ENCODE measurements at regions of chr2 and their contacts with region 1.

Region 1: DNA sequence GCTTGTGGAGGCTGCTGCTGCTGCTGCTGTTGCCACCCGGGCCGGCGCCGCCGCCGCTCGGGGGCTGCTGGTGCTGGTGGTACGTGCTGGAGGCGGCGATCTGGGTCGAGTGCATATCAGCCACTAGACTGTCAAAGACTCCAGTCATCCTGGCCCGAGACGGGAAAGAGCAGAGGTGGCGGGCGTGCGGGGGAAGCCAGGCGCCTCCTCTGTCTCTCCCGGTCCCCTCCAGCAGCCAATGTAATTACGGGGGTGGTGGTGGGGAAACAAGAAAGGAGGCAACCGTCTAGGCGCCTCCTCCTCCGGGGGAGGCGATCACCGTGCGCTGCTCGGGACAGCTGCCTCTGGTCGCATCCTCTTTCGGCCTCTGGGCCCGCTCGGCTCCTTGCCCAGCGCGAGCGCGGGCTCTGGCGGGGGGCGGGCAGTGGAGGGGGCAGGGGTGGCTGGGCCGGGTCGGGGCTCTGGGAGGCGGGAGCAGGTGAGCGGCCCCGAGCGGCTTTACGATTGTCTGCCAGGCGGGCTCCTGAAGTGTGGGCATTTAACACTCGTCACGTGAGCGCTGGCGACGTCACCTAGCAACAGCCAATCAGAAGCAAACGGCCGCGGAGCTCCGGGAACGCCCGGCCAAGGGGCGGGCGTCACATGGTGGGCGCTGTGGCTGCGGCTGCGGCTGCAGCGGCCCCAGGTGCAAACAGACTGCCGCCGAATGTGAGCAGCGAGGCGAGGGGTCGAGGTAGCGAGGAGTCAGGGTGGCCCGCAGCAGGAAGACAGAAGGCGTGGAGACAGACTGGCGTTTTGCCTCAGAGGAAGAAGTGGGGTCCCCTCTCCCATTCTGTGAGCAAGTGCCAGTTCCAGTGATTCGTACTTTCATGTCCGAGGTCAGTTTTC is at the start of gene DLX2:
- DNase-seq: peak; percentile 88
- ATAC-seq: peak; percentile 43
- H3K4me3 Mint-ChIP-seq: peak within 1 kb of the TSS; percentile 76
- H3K27ac Mint-ChIP-seq: no peak within 1 kb of the TSS
- H3K4me1 Mint-ChIP-seq: peaks cover 45% of the 10 kb centered on the region
- H3K27me3 Mint-ChIP-seq: peaks cover 69% of the 10 kb centered on the region
- CTCF ChIP-seq: no peak
- total RNA-seq, gene DLX2: not detected

Region 2: DNA sequence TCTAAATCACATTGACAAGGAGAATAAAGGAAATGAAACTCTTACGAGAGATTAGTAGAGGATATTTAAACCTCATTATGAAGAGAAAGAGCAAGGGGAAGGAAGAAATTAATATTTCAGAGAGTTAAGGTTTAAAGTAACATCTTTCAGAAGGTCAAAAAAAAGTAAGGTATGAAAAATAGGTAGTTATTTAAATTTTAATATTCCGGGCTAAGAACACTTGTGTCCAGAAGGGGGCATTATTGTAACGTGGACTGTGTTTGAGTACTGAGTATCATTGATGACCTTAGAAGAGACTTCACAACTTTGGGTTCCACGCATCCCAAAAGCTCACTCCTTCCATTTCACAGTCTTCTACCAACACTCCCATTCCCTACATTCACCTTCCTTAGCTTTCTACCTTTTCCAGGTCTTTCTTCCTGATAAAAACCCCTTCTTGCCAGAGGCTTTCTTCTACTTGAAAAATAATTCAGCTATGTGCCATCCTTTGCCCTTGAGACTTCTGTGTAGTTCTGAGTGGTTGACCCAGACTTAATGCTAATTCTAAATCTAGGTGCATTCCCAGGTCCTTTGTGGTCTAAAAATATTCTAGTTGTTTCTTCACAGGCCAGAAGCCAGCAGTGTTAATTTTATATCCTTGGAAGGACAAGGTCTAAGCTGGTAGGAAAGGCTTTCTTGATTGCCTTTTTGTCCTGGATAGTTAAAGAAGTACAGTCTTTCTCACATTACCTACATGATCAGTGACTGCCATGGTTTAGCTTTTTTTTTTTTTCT is 398.9 kb before region 1 on chr2:
- CTCF ChIA-PET with region 1: interaction called, 60 read pairs
- POLR2A ChIA-PET with region 1: no interaction called
- intact Hi-C with region 1: loop called (anchors 2 kb)
- DNase-seq: no peak
- ATAC-seq: no peak
- H3K4me3 Mint-ChIP-seq: no peak overlapping the region
- H3K27ac Mint-ChIP-seq: no peak overlapping the region
- H3K4me1 Mint-ChIP-seq: peaks cover 8% of the 10 kb centered on the region
- H3K27me3 Mint-ChIP-seq: no peaks in the 10 kb centered on the region
- CTCF ChIP-seq: peak; percentile 76

Region 3: GRCh38 chr2:171922230-171923022 is 180.2 kb before region 1 on chr2 and contains the start of gene HAT1:
- CTCF ChIA-PET with region 1: interaction called, 3 read pairs
- POLR2A ChIA-PET with region 1: no interaction called
- intact Hi-C with region 1: loop called (anchors 10 kb)
- DNase-seq: peak; percentile 99
- ATAC-seq: peak; percentile 97
- H3K4me3 Mint-ChIP-seq: peak within 1 kb of the TSS; percentile 91
- H3K27ac Mint-ChIP-seq: peak within 1 kb of the TSS; percentile 95
- H3K4me1 Mint-ChIP-seq: peaks cover 34% of the 10 kb centered on the region
- H3K27me3 Mint-ChIP-seq: no peaks in the 10 kb centered on the region
- CTCF ChIP-seq: no peak
- total RNA-seq, gene HAT1: 75.2 to 79.4 TPM

Region 4: GRCh38 chr2:172066394-172066886 is 36.2 kb before region 1 on chr2:
- CTCF ChIA-PET with region 1: no interaction called
- POLR2A ChIA-PET with region 1: no interaction called
- intact Hi-C with region 1: no loop called
- DNase-seq: no peak
- ATAC-seq: no peak
- H3K4me3 Mint-ChIP-seq: no peak overlapping the region
- H3K27ac Mint-ChIP-seq: no peak overlapping the region
- H3K4me1 Mint-ChIP-seq: no peaks in the 10 kb centered on the region
- H3K27me3 Mint-ChIP-seq: no peaks in the 10 kb centered on the region
- CTCF ChIP-seq: no peak

Region 5: DNA sequence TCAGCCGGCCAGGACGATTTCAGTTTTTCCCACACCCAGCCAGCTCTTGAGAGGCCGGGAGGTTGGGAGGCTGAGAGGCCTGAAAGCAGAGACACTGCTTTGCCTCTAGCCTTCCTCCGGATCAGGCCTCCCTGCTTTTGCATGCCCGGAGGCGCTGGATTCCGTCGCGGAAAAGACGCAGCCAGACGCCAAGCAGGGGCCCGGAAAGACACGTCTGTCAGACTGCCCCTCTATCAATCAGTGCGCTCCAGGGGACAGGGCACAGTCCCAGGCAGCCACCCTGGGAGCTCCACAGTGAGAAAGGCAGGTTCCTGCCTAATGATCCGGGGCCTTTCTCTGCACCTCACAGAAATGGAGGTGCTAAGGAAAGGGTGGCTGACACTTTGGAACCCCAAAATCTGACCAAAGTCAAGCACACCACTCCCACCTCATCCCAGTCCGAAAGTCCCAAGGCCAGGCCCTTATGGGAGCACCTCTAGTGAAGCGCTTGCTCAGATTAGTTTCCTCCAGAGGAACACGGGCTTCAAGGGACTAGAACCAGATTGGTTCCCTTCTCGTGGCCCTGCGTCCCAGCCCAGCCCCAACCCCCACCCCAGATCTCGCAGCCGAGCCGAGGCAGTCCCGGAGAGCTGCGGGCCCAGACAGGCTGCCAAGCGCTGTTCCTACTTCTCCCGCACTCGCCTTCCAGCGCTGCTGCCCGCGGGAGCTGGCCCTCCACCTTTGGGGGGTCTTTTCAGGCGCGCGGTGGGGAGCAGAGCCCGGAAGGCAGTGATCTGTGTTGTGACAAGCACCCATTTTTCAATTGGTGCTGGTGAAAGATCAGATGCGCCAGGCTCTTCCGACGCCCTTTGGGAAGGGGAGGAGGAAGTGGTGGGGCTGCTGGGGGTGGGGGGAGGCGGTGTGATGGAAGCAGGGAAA is 12.3 kb before region 1 on chr2:
- CTCF ChIA-PET with region 1: interaction called, 43 read pairs
- POLR2A ChIA-PET with region 1: interaction called, 4 read pairs
- intact Hi-C with region 1: loop called (anchors 2 kb)
- DNase-seq: no peak
- ATAC-seq: no peak
- H3K4me3 Mint-ChIP-seq: no peak overlapping the region
- H3K27ac Mint-ChIP-seq: no peak overlapping the region
- H3K4me1 Mint-ChIP-seq: peaks cover 42% of the 10 kb centered on the region
- H3K27me3 Mint-ChIP-seq: peaks cover 84% of the 10 kb centered on the region
- CTCF ChIP-seq: no peak

Region 6: GRCh38 chr2:172131713-172132555 is 29.3 kb after region 1 on chr2:
- CTCF ChIA-PET with region 1: interaction called, 15 read pairs
- POLR2A ChIA-PET with region 1: no interaction called
- intact Hi-C with region 1: no loop called
- DNase-seq: no peak
- ATAC-seq: no peak
- H3K4me3 Mint-ChIP-seq: no peak overlapping the region
- H3K27ac Mint-ChIP-seq: no peak overlapping the region
- H3K4me1 Mint-ChIP-seq: no peaks in the 10 kb centered on the region
- H3K27me3 Mint-ChIP-seq: peaks cover 3% of the 10 kb centered on the region
- CTCF ChIP-seq: no peak

Region 7: GRCh38 chr2:172143817-172144216 is 41.2 kb after region 1 on chr2:
- CTCF ChIA-PET with region 1: no interaction called
- POLR2A ChIA-PET with region 1: no interaction called
- intact Hi-C with region 1: no loop called
- DNase-seq: no peak
- ATAC-seq: no peak
- H3K4me3 Mint-ChIP-seq: no peak overlapping the region
- H3K27ac Mint-ChIP-seq: no peak overlapping the region
- H3K4me1 Mint-ChIP-seq: peaks cover 5% of the 10 kb centered on the region
- H3K27me3 Mint-ChIP-seq: peaks cover 6% of the 10 kb centered on the region
- CTCF ChIP-seq: no peak

Region 8: DNA sequence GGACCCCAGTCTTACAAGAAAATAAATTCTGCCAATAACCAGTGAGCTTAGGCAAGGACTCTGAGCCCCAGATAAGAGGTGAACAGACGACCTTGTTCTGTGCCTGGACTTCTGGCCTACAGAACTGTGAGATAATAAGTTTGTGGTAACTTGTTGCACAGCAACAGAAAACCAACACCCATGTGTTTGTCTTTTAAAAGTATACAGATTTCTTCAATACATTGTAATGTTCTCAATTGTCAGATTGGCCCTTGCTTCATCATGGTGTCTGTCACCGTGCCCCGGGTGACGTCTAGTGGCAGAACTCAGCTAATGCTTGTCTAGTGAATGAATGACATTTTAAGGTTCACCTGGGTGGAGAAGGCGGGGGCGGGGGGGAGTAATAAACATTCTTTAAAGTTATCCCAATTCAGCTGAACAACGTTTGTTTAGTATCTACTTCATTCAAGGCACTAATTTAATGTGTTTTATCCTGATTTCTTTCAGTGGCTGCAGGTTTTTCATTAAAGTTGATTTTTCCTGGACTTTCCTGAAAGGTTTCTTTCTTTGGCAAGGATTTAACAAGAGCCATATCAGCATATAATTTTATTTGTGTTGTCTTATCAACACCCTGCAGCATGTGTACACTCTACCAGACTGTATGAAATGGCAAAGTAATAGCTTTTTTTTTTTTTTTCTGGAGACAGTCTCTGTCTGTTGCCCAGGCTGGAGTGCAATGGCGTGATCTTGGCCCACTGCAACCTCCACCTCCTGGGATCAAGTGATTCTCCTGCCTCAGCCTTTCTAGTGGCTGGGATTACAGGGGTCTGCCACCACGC is 123.8 kb after region 1 on chr2:
- CTCF ChIA-PET with region 1: no interaction called
- POLR2A ChIA-PET with region 1: no interaction called
- intact Hi-C with region 1: no loop called
- DNase-seq: peak; percentile 47
- ATAC-seq: peak; percentile 64
- H3K4me3 Mint-ChIP-seq: no peak overlapping the region
- H3K27ac Mint-ChIP-seq: no peak overlapping the region
- H3K4me1 Mint-ChIP-seq: peaks cover 19% of the 10 kb centered on the region
- H3K27me3 Mint-ChIP-seq: no peaks in the 10 kb centered on the region
- CTCF ChIP-seq: peak; percentile 16

Measured in activated CD8-positive, alpha-beta T cell treated with anti-CD3 and anti-CD28 coated beads for 36 hours (primary cell).